GM23248 (cell line): ENCODE measurements at regions of chr9 and their contacts with region 1.

Region 1: DNA sequence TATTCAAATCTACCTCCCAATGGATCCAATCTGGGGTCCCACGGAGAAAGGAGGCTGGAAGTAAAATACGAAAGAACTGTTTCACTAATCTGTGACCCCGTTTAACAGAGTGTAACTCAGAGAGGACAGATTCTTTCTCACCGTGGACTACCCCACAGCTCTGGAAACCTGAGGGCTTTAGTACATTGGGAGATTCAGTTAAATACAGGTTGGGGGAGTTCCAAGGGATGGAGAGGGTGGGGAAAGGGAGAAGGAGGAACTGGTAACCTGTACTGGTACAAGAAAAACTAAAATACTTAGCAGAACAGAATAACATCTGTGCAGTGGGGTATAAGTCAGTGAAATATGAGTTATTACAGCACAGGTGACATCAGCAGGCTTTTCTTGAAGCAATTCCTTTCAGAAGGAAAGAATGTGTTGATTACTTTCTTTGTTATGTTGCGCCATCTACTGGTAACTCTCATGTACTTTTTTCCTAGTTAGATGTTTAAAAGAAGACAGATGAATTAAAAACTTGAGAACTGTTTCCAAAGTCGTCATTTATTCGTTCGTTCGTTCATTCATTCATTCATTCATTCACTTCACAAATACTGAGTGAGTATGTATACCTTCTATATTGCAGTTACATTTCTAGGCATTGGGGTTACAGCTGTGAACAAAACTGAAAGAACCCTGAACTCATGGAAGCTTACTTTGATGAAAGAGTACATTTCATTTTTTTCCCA is 30.0 kb upstream of the STOM start:
- DNase-seq: peak; percentile 85
- H3K4me3 ChIP-seq: no peak overlapping the region
- H3K27ac ChIP-seq: peak overlapping the region; percentile 95
- H3K4me1 ChIP-seq: peaks cover 19% of the 10 kb centered on the region
- H3K27me3 ChIP-seq: no peaks in the 10 kb centered on the region

Region 2: GRCh38 chr9:121213136-121213806 is 186.8 kb before region 1 on chr9:
- in situ Hi-C with region 1: loop called (anchors 10 kb)
- DNase-seq: peak; percentile 88
- H3K4me3 ChIP-seq: no peak overlapping the region
- H3K27ac ChIP-seq: no peak overlapping the region
- H3K4me1 ChIP-seq: peaks cover 3% of the 10 kb centered on the region
- H3K27me3 ChIP-seq: no peaks in the 10 kb centered on the region